Activated naive CD4-positive, alpha-beta T cell treated with anti-CD3 and anti-CD28 coated beads for 36 hours (primary cell): ENCODE measurements at regions of chr6 and their contacts with region 1.

Region 1: DNA sequence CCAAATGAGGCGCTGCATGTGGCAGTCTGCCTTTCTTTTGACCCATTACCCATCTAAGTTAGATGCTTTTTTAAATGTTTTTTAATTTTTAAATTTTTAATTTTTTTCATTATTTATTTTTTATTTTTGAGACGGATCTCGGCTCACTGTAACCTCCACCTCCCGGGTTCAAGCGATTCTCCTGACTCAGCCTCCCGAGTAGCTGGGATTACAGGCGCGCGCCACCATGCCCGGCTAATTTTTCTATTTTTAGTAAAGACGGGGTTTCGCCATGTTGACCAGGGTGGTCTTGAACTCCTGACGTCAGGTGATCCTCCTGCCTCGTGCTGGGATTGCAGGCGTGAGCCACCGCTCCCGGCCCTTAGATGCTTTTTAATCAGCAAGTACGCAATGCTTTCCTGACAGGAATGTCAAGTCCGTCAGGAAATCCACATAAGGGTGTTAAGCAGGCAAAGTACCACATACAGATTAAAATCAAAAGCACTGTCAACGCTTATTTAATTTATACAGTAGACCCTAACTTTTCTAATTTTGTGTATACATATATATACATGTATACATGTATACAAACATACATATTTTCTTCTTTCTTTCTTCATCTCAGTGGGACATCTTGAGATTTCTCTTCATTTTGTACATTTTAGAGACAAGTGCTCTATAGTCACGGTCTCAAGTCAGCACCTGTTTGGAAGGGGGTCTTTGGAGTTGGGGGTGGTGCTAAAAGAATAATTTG is 995 bp upstream of the GSTA4 start:
- DNase-seq: peak; percentile 54
- H3K4me3 Mint-ChIP-seq: peak overlapping the region; percentile 98
- H3K27ac Mint-ChIP-seq: peak overlapping the region; percentile 99
- H3K4me1 Mint-ChIP-seq: peaks cover 29% of the 10 kb centered on the region
- H3K27me3 Mint-ChIP-seq: peaks cover 13% of the 10 kb centered on the region

Region 2: DNA sequence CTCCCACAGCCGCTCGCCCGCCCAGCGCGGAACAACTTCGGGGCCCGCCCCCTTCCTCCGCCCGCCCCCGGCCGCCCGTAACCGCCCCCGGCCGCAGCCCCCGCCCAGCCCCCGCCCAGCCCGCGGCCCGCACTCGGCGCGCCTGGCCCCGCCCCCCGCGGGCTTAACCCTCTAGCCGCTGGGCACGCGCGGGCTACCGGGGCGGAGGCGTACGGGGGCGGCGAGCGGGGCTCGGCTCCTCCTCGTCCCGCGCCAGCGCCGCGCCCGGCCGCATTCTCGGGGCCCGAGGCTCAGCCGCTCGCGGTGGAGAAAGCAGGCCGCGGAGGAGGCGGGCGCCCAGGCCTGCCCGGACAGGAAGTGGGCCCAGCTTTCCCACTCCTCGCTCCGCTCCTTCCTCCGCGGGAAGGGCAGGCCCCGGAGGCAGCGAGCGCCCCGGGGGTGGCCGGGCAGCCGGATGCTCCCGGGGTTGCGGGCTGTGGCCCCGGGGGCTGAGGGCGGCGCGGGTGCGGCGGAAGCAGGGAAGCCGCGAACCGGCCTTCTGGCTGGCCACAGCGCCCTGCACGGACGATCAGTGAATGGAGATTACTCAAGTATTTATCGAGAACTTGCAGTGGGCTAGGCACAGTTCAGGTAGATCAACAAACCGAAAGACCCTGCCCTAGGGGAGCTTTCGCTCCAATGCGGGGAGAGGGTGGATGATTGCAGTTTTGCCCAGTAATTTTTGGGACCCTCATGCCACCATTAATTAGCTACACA is 418.9 kb before region 1 on chr6 and contains the start of gene TRAM2:
- CTCF ChIA-PET with region 1: no interaction called
- intact Hi-C with region 1: loop called (anchors 2 kb)
- DNase-seq: peak; percentile 65
- H3K4me3 Mint-ChIP-seq: peak within 1 kb of the TSS; percentile 78
- H3K27ac Mint-ChIP-seq: peak within 1 kb of the TSS; percentile 65
- H3K4me1 Mint-ChIP-seq: peaks cover 43% of the 10 kb centered on the region
- H3K27me3 Mint-ChIP-seq: no peaks in the 10 kb centered on the region
- total RNA-seq, gene TRAM2: 2.5 to 2.9 TPM

Region 3: GRCh38 chr6:52670502-52671409 is 325.3 kb before region 1 on chr6 and contains the start of gene TMEM14A:
- CTCF ChIA-PET with region 1: no interaction called
- intact Hi-C with region 1: loop called (anchors 5 kb)
- DNase-seq: peak; percentile 93
- H3K4me3 Mint-ChIP-seq: peak within 1 kb of the TSS; percentile 82
- H3K27ac Mint-ChIP-seq: peak within 1 kb of the TSS; percentile 51
- H3K4me1 Mint-ChIP-seq: peaks cover 27% of the 10 kb centered on the region
- H3K27me3 Mint-ChIP-seq: no peaks in the 10 kb centered on the region
- total RNA-seq, gene TMEM14A: 10.4 to 11.0 TPM

Region 4: GRCh38 chr6:52839119-52840055 is 156.7 kb before region 1 on chr6:
- CTCF ChIA-PET with region 1: no interaction called
- intact Hi-C with region 1: loop called (anchors 5 kb)
- DNase-seq: peak; percentile 66
- H3K4me3 Mint-ChIP-seq: no peak overlapping the region
- H3K27ac Mint-ChIP-seq: no peak overlapping the region
- H3K4me1 Mint-ChIP-seq: no peaks in the 10 kb centered on the region
- H3K27me3 Mint-ChIP-seq: peaks cover 32% of the 10 kb centered on the region

Region 5: GRCh38 chr6:52904562-52905279 is 91.4 kb before region 1 on chr6:
- CTCF ChIA-PET with region 1: interaction called, 4 read pairs
- intact Hi-C with region 1: loop called (anchors 1 kb)
- DNase-seq: peak; percentile 42
- H3K4me3 Mint-ChIP-seq: no peak overlapping the region
- H3K27ac Mint-ChIP-seq: no peak overlapping the region
- H3K4me1 Mint-ChIP-seq: no peaks in the 10 kb centered on the region
- H3K27me3 Mint-ChIP-seq: peaks cover 9% of the 10 kb centered on the region

Region 6: GRCh38 chr6:52984247-52984646 is 11.8 kb before region 1 on chr6:
- CTCF ChIA-PET with region 1: interaction called, 14 read pairs
- intact Hi-C with region 1: loop called (anchors 1 kb)
- DNase-seq: peak; percentile 81
- H3K4me3 Mint-ChIP-seq: no peak overlapping the region
- H3K27ac Mint-ChIP-seq: peak overlapping the region; percentile 82
- H3K4me1 Mint-ChIP-seq: peaks cover 63% of the 10 kb centered on the region
- H3K27me3 Mint-ChIP-seq: peaks cover 8% of the 10 kb centered on the region

Region 7: GRCh38 chr6:53544470-53545308 is 548.6 kb after region 1 on chr6 and contains the start of gene GCLC:
- CTCF ChIA-PET with region 1: no interaction called
- intact Hi-C with region 1: loop called (anchors 5 kb)
- DNase-seq: peak; percentile 88
- H3K4me3 Mint-ChIP-seq: peak within 1 kb of the TSS; percentile 94
- H3K27ac Mint-ChIP-seq: peak within 1 kb of the TSS; percentile 86
- H3K4me1 Mint-ChIP-seq: peaks cover 63% of the 10 kb centered on the region
- H3K27me3 Mint-ChIP-seq: no peaks in the 10 kb centered on the region
- total RNA-seq, gene GCLC: 13.9 to 18.1 TPM